ENCODE measurements at regions of chr5 and their contacts with region 1.

Region 1: DNA sequence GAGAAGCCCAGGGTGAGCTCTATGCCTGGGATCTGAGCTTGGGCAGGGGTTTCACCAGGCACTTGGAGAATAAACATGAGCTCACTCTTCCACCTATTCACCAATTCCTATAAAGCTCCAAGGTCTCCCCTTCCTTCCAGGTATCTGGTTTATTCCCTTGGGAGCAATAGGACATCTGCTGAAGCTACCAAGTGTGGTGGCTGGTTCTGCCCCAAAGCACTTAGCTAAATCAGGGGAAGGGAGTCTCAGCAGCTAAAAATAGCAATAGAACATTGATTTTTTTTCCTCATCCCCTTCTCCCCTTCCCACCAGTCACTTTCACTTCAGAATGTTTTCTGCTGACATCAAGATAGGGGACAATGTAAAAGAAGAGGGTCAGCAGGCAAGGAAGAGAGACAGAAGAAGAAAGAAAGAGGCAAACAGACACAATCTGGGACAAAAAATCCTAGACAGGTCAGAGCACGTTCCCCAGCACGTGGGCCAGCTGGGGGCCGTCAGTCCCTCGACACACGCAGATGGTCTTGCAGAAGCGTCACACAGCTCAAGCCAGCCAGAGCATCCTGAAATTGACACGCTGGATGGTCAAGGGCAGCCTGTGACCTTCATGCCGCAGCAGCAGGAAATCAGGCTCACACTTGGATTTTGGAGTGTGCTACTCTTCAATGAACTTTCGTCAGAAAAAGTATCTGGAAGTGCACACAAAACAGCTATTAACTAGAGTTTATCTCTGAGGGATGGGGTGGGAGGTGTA is 176.0 kb downstream of the ZNF608 start:
- DNase-seq: no peak

Region 2: GRCh38 chr5:124537107-124537506 is 33.4 kb before region 1 on chr5:
- intact Hi-C with region 1: loop called in 1 of 2 experiments (anchors 1 kb)
- DNase-seq: no peak

Region 3: GRCh38 chr5:124583469-124584350 is 13.2 kb after region 1 on chr5:
- intact Hi-C with region 1: loop called in 1 of 2 experiments (anchors 1 kb)
- DNase-seq: no peak